ENCODE measurements at regions of chr16 and their contacts with region 1.

Region 1: DNA sequence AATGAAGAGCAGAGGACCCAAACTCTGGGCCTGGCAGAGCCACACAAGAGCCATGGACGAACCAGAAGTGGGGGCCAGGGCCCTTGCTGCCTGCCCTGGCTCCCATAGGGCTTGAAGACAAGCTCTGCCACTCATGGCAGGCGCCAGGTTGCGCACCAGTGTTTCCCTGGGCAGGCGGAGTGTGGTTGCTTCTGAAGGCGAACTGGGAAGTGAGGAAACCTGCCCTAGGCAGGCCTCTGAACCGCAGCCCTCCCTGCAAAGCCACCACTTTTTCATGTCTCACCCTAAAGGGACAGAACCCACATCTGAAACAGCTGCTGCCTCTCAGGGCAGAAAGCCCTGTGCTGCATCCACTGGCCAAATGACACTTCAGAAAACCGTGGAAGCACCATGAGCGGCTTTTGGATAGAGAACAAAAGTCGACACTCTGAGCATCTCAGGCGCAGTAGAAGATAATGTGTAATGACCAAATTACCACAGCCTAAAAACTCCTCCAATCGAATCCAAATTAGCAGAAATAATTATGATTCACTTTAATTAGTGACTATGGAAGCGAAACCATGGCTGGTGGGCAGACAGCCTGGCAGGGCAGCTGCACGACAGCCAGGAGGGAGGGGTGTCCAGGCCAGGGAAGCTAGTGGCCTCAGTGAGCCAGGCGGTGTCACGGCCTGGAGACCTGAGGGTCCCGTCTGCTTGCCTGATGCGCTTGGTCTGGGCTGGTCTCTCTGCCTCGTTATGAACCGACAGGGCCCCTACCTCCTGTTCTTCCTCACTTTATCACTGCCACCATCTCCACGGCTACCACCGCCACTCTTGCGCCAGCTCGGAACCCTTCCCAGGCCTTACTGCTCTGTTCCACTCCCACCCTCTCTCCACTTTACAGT is 59.1 kb downstream of the PRMT7 start:
- DNase-seq: peak; percentile 63
- H3K4me3 Mint-ChIP-seq: peak overlapping the region; percentile 35
- H3K27ac Mint-ChIP-seq: peak overlapping the region; percentile 67
- H3K4me1 Mint-ChIP-seq: peaks cover 49% of the 10 kb centered on the region
- H3K27me3 Mint-ChIP-seq: peaks cover 100% of the 10 kb centered on the region

Region 2: GRCh38 chr16:68356249-68356918 is 13.6 kb before region 1 on chr16:
- CTCF ChIA-PET with region 1: interaction called, 10 read pairs
- DNase-seq: peak; percentile 89
- H3K4me3 Mint-ChIP-seq: peak overlapping the region; percentile 57
- H3K27ac Mint-ChIP-seq: peak overlapping the region; percentile 69
- H3K4me1 Mint-ChIP-seq: peaks cover 49% of the 10 kb centered on the region
- H3K27me3 Mint-ChIP-seq: peaks cover 42% of the 10 kb centered on the region

Region 3: GRCh38 chr16:68512183-68512582 is 142.2 kb after region 1 on chr16:
- CTCF ChIA-PET with region 1: interaction called, 15 read pairs
- DNase-seq: no peak
- H3K4me3 Mint-ChIP-seq: no peak overlapping the region
- H3K27ac Mint-ChIP-seq: no peak overlapping the region
- H3K4me1 Mint-ChIP-seq: peaks cover 6% of the 10 kb centered on the region
- H3K27me3 Mint-ChIP-seq: peaks cover 40% of the 10 kb centered on the region

Region 4: GRCh38 chr16:68605746-68606145 is 235.8 kb after region 1 on chr16:
- CTCF ChIA-PET with region 1: no interaction called
- DNase-seq: no peak
- H3K4me3 Mint-ChIP-seq: no peak overlapping the region
- H3K27ac Mint-ChIP-seq: no peak overlapping the region
- H3K4me1 Mint-ChIP-seq: no peaks in the 10 kb centered on the region
- H3K27me3 Mint-ChIP-seq: no peaks in the 10 kb centered on the region